ENCODE measurements at regions of chr11 and their contacts with region 1.

Region 1: GRCh38 chr11:10653926-10654810 is 39.4 kb downstream of the IRAG1 start:
- DNase-seq: peak; percentile 50
- H3K4me3 Mint-ChIP-seq: no peak overlapping the region
- H3K27ac Mint-ChIP-seq: no peak overlapping the region
- H3K4me1 Mint-ChIP-seq: peaks cover 14% of the 10 kb centered on the region
- H3K27me3 Mint-ChIP-seq: no peaks in the 10 kb centered on the region

Region 2: DNA sequence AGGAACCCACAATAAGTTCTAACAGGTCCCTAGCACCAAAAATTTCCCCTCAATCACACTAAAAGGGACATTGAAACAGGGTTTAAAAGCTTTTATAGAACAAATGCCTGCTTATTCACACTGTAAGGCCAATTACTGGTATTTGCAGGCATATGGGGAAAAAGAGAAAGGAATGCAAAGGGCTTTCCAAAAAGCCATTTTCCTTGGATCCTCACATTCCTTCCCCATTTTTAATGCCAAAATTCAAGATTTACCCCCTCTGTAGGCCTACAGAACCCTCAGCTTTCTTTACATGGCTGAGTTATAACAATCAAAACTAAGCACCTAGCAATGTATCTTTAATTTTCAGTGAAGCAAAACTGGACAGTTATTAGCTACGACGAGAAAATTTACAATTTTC is 462.1 kb before region 1 on chr11:
- CTCF ChIA-PET with region 1: no interaction called
- POLR2A ChIA-PET with region 1: no interaction called
- intact Hi-C with region 1: no loop called
- DNase-seq: no peak
- H3K4me3 Mint-ChIP-seq: no peak overlapping the region
- H3K27ac Mint-ChIP-seq: no peak overlapping the region
- H3K4me1 Mint-ChIP-seq: no peaks in the 10 kb centered on the region
- H3K27me3 Mint-ChIP-seq: no peaks in the 10 kb centered on the region

Region 3: DNA sequence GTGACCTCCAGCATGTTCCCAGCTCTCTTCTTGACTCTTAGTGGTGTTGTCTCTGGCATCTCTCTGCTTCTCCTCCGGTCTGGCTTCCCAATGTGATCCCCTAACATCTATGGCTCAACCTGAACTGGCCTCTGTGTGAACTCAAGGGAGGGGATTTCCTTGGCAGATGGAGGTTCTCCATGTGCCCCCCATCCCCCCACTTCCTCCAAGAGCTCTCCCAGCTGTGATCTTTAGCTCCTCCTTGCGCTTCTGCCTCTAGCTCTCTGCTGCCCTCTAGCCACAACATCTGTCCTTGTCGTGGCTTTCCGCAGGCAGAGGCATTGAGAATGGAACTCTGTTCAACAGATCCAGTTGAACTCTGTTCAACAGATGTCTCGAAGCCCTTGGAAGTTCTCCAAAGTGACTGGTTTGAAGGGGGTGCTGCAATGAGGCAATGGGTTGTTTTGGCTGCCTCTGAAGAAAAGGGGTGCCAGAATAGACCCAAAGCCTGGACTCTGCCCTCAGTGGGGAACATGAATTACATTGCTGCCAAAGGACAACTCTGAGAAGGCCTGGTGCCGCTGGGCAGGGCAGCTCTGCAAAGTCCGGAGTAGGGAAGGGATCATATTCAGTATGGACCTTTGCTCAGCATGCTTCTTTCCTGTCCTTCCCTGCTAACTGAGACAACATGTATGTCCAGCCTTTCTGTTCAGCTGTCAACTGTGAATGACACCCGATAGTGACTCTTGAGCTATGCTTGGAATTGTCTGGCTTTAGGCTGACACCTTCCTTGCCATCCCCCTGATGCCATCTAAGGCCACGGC is 287.4 kb before region 1 on chr11:
- CTCF ChIA-PET with region 1: interaction called, 11 read pairs
- POLR2A ChIA-PET with region 1: no interaction called
- intact Hi-C with region 1: no loop called
- DNase-seq: peak; percentile 79
- H3K4me3 Mint-ChIP-seq: no peak overlapping the region
- H3K27ac Mint-ChIP-seq: no peak overlapping the region
- H3K4me1 Mint-ChIP-seq: peaks cover 6% of the 10 kb centered on the region
- H3K27me3 Mint-ChIP-seq: peaks cover 3% of the 10 kb centered on the region

Region 4: GRCh38 chr11:10405855-10406592 is 248.1 kb before region 1 on chr11:
- CTCF ChIA-PET with region 1: interaction called, 40 read pairs
- POLR2A ChIA-PET with region 1: no interaction called
- intact Hi-C with region 1: loop called (anchors 1 kb)
- DNase-seq: peak; percentile 60
- H3K4me3 Mint-ChIP-seq: no peak overlapping the region
- H3K27ac Mint-ChIP-seq: no peak overlapping the region
- H3K4me1 Mint-ChIP-seq: peaks cover 15% of the 10 kb centered on the region
- H3K27me3 Mint-ChIP-seq: no peaks in the 10 kb centered on the region

Region 5: GRCh38 chr11:10540923-10541560 is 113.1 kb before region 1 on chr11 and contains the start of gene RNF141:
- CTCF ChIA-PET with region 1: interaction called, 22 read pairs
- POLR2A ChIA-PET with region 1: no interaction called
- intact Hi-C with region 1: loop called (anchors 5 kb)
- DNase-seq: peak; percentile 97
- H3K4me3 Mint-ChIP-seq: peak within 1 kb of the TSS; percentile 90
- H3K27ac Mint-ChIP-seq: peak within 1 kb of the TSS; percentile 40
- H3K4me1 Mint-ChIP-seq: peaks cover 12% of the 10 kb centered on the region
- H3K27me3 Mint-ChIP-seq: no peaks in the 10 kb centered on the region
- total RNA-seq, gene RNF141: 17.9 to 18.7 TPM

Region 6: DNA sequence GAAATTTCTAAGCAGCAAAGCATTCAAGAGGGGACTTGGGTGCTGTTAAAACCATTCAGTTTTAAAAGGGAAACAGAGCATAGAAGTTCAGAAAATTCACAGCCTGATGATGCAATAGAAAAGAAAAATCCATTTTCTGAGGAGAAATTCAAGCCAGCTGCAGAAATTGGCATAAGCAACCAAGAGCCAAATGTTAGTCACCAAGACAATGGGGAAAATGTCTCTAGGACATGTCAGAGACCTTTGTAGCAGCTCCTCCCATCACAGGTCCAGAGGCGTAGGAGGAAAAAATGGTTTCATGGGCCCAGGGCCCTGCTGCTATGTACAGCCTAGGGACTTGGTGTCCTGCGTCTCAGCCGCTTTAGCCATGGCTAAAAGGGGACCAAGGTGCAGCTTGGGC is 44.9 kb after region 1 on chr11:
- CTCF ChIA-PET with region 1: no interaction called
- POLR2A ChIA-PET with region 1: no interaction called
- intact Hi-C with region 1: no loop called
- DNase-seq: no peak
- H3K4me3 Mint-ChIP-seq: no peak overlapping the region
- H3K27ac Mint-ChIP-seq: no peak overlapping the region
- H3K4me1 Mint-ChIP-seq: no peaks in the 10 kb centered on the region
- H3K27me3 Mint-ChIP-seq: peaks cover 3% of the 10 kb centered on the region

Region 7: GRCh38 chr11:10735481-10736475 is 81.6 kb after region 1 on chr11:
- CTCF ChIA-PET with region 1: interaction called, 5 read pairs
- POLR2A ChIA-PET with region 1: no interaction called
- intact Hi-C with region 1: loop called (anchors 1 kb)
- DNase-seq: peak; percentile 92
- H3K4me3 Mint-ChIP-seq: peak overlapping the region; percentile 53
- H3K27ac Mint-ChIP-seq: no peak overlapping the region
- H3K4me1 Mint-ChIP-seq: peaks cover 11% of the 10 kb centered on the region
- H3K27me3 Mint-ChIP-seq: peaks cover 2% of the 10 kb centered on the region

Measured in activated CD4-positive, alpha-beta memory T cell treated with anti-CD3 and anti-CD28 coated beads for 36 hours (primary cell).